HEK293 (cell line): ENCODE measurements at regions of chr22 and their contacts with region 1.

Region 1: DNA sequence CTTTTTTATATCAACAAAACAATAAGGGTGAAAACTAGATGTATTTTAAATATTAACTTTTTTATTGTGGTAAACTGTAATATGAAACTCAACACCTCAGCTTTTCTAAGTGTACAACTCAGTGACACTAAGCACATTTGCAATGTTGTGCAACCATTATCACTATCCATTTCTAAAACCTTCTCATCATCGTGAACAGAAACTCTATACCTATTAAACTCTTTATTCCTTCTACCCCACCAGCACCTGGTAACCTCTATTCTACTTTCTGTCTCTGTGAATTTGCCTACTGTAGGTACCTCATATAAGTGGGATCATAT is 9.4 kb downstream of the HORMAD2 start:
- H3K4me3 ChIP-seq: no peak overlapping the region
- H3K27ac ChIP-seq: no peak overlapping the region
- H3K4me1 ChIP-seq: no peaks in the 10 kb centered on the region
- CTCF ChIP-seq: no peak

Region 2: DNA sequence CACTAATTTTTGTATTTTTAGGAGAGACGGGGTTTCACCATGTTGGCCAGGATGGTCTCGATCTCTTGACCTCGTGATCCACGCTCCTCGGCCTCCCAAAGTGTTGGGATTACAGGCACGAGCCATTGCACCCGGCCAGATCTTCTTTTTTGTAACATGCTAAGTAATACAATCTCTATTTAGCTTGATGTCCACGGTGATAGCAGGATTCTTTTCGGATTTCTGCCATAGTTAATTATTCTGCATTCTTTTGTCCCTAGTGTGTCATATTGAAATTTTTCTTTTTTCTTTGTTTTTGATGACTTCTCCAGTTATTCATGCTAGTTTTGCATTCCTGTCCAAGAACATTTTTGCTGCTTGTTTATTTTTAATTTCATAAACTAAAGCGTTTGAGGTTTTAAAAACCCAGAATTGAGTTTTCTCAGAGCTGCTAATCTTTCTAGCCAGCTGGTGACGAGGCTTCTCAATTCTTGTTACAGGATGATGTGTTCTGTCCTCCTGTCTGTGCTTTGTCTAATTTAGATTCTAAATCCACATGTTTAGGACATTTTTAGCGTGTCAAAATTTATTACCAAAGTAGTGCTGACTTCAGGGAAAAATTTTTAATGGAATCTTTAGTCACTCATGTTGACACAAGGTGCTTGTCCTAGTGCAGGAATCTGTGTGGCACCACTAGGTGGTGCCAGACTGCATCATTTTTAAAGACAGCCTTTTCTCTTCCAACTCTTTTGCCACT is 464.4 kb before region 1 on chr22:
- CTCF ChIA-PET with region 1: interaction called, 26 read pairs
- POLR2A ChIA-PET with region 1: no interaction called
- H3K4me3 ChIP-seq: no peak overlapping the region
- H3K27ac ChIP-seq: no peak overlapping the region
- H3K4me1 ChIP-seq: peaks cover 44% of the 10 kb centered on the region
- CTCF ChIP-seq: no peak

Region 3: GRCh38 chr22:29654356-29654755 is 435.3 kb before region 1 on chr22:
- CTCF ChIA-PET with region 1: interaction called, 11 read pairs
- POLR2A ChIA-PET with region 1: no interaction called
- H3K4me3 ChIP-seq: no peak overlapping the region
- H3K27ac ChIP-seq: no peak overlapping the region
- H3K4me1 ChIP-seq: no peaks in the 10 kb centered on the region
- CTCF ChIP-seq: no peak

Region 4: GRCh38 chr22:29701155-29701999 is 388.2 kb before region 1 on chr22:
- CTCF ChIA-PET with region 1: interaction called, 11 read pairs
- POLR2A ChIA-PET with region 1: no interaction called
- H3K4me3 ChIP-seq: no peak overlapping the region
- H3K27ac ChIP-seq: no peak overlapping the region
- H3K4me1 ChIP-seq: peaks cover 20% of the 10 kb centered on the region
- CTCF ChIP-seq: no peak

Region 5: GRCh38 chr22:30104501-30105156 is 15.0 kb after region 1 on chr22:
- CTCF ChIA-PET with region 1: interaction called, 12 read pairs
- POLR2A ChIA-PET with region 1: no interaction called
- H3K4me3 ChIP-seq: no peak overlapping the region
- H3K27ac ChIP-seq: no peak overlapping the region
- H3K4me1 ChIP-seq: no peaks in the 10 kb centered on the region
- CTCF ChIP-seq: no peak

Region 6: DNA sequence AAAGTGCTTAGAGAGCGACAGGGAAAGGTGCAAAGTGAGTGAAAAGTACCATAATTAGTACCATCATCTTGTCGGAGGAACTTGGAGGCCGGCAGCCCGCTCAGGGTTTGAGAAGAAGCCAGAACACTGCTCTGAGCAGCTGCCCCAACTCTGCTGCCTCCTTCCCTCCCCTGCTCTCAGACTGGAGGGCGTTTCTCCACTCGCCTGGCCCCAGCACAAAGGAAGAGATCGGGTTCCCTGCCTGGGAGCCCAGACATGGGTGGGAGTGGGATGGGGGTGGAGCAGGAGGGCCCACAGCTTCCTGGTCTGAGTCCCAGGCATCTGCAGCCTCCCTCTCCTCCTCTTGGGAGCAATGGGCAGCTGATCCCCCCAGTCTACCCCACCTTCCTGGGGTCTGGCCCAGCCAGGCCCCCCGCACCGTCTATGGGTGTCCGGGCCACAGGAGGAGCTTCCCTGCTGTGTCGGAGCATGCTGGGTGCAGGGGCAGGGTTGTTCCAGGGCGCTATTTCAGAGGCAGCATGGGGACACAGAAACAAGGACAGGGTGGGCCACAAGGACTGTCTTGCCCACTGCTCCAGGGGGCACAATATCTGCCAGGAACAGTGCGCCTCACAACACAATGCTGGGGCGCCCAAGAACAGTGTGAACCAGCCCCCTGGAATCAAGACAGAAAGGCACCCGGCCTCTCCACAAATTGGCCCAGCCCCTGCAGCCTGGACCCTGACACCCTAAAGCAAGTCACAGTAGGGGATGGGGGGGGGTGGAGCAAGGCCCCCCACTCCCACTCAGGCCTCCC is 152.2 kb after region 1 on chr22:
- CTCF ChIA-PET with region 1: no interaction called
- POLR2A ChIA-PET with region 1: no interaction called
- H3K4me3 ChIP-seq: no peak overlapping the region
- H3K27ac ChIP-seq: no peak overlapping the region; the same call in 1 of the 2 replicates
- H3K4me1 ChIP-seq: peaks cover 3% of the 10 kb centered on the region; the same call in 1 of the 2 replicates
- CTCF ChIP-seq: no peak